ENCODE measurements at regions of chr16 and their contacts with region 1.

Region 1: GRCh38 chr16:56246051-56246817 is 54.9 kb downstream of the GNAO1 start:
- DNase-seq: no peak
- H3K4me3 ChIP-seq: no peak overlapping the region
- H3K4me3 Mint-ChIP-seq: no peak overlapping the region
- H3K27ac ChIP-seq: no peak overlapping the region
- H3K27ac Mint-ChIP-seq: peak overlapping the region in 3 of 8 donors; percentile 7 to 43 (median 30)
- H3K4me1 ChIP-seq: no peaks in the 10 kb centered on the region
- H3K4me1 Mint-ChIP-seq: peaks cover 0 to 11% (median 0%) of the 10 kb centered on the region in 3 donors
- H3K27me3 ChIP-seq: no peaks in the 10 kb centered on the region
- H3K27me3 Mint-ChIP-seq: no peaks in the 10 kb centered on the region

Region 2: GRCh38 chr16:56183266-56183665 is 63.0 kb before region 1 on chr16:
- CTCF ChIA-PET with region 1: no interaction called
- POLR2A ChIA-PET with region 1: no interaction called
- DNase-seq: no peak
- H3K4me3 ChIP-seq: no peak overlapping the region
- H3K4me3 Mint-ChIP-seq: no peak overlapping the region
- H3K27ac ChIP-seq: no peak overlapping the region
- H3K27ac Mint-ChIP-seq: no peak overlapping the region
- H3K4me1 ChIP-seq: no peaks in the 10 kb centered on the region
- H3K4me1 Mint-ChIP-seq: no peaks in the 10 kb centered on the region
- H3K27me3 ChIP-seq: peaks cover 3% of the 10 kb centered on the region
- H3K27me3 Mint-ChIP-seq: peaks cover 13 to 32% of the 10 kb centered on the region in 2 donors

Region 3: DNA sequence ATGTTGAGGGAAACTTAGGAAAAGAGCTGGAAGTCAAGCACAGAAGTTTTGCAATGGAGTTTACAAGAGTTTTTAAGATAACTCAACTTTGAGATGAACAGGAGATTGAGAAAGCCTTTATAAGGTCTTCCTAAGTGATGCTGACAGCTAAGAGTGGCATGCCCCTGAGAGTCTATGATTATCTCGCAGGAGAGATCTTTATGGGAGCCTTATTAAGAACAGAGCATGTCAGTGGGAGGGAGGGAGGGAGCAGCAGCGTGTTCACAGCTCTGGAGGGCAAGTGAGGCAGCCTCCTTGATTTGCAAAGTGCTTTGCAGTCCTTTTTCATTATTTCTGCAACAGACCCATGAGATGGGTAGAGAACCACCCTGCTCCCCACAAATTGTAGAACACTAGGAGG is 24.2 kb before region 1 on chr16:
- CTCF ChIA-PET with region 1: no interaction called
- POLR2A ChIA-PET with region 1: interaction called, 11 read pairs
- DNase-seq: no peak
- H3K4me3 ChIP-seq: no peak overlapping the region
- H3K4me3 Mint-ChIP-seq: no peak overlapping the region
- H3K27ac ChIP-seq: no peak overlapping the region
- H3K27ac Mint-ChIP-seq: no peak overlapping the region
- H3K4me1 ChIP-seq: peaks cover 23% of the 10 kb centered on the region
- H3K4me1 Mint-ChIP-seq: peaks cover 24 to 28% (median 25%) of the 10 kb centered on the region in 3 donors
- H3K27me3 ChIP-seq: no peaks in the 10 kb centered on the region
- H3K27me3 Mint-ChIP-seq: peaks cover 0 to 1% of the 10 kb centered on the region in 2 donors

Region 4: GRCh38 chr16:56311208-56312027 is 65.2 kb after region 1 on chr16:
- CTCF ChIA-PET with region 1: no interaction called
- POLR2A ChIA-PET with region 1: no interaction called
- DNase-seq: no peak
- H3K4me3 ChIP-seq: no peak overlapping the region
- H3K4me3 Mint-ChIP-seq: no peak overlapping the region
- H3K27ac ChIP-seq: no peak overlapping the region
- H3K27ac Mint-ChIP-seq: peak overlapping the region in 1 of 8 donors; percentile 54
- H3K4me1 ChIP-seq: no peaks in the 10 kb centered on the region
- H3K4me1 Mint-ChIP-seq: peaks cover 0 to 5% (median 0%) of the 10 kb centered on the region in 3 donors
- H3K27me3 ChIP-seq: no peaks in the 10 kb centered on the region
- H3K27me3 Mint-ChIP-seq: no peaks in the 10 kb centered on the region